Naive thymus-derived CD8-positive, alpha-beta T cell (primary cell): ENCODE measurements at regions of chr19 and their contacts with region 1.

Region 1: DNA sequence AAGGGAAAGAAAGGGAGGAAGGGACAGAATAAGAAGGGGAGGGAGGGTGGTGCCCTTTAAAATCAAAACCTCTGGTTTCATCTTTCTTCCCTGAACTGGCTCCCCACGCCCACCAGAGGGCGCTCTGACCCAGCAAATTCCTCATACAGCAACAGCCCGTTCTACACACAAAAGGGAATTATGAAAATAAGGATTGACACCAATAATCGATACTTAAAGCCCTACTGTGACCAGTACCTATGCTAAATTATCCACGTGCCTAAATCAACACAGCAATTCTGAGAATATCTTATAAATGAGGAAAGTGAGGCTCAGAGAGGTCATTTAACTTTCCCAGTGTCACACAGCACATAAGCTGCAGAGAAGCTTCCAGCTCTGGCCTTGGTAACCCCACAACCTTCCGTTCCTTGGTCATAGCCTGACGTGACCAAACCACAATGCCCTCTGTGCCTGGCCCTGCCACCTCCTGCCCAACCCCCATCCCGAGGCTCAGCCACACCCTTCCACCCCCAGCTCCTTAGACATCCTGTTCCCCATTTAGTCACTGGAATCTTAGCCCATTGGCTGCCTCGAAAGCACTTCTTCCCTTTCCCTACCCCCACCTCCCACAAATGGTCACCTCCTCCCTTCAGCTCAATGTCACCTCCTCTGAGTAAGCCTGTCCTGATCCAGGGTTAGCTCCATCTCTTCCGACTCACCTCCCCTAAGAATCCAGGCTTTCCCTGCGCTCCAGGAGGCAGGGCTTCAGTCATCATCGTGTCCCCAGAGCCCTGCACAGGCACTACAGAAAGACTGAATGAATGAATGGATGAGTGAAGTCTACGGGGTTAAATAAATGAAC is 34.2 kb upstream of the PNMA8B start:
- DNase-seq: peak; percentile 53 to 84 (median 74)
- ATAC-seq: peak; percentile 74 to 87
- H3K4me3 Mint-ChIP-seq: peak overlapping the region in 4 of 10 donors; percentile 1 to 30 (median 15)
- H3K27ac Mint-ChIP-seq: peak overlapping the region in 5 of 10 donors; percentile 43 to 83 (median 75)
- H3K4me1 Mint-ChIP-seq: peaks cover 12 to 31% (median 23%) of the 10 kb centered on the region in 4 donors
- H3K27me3 Mint-ChIP-seq: peaks cover 0 to 2% (median 0%) of the 10 kb centered on the region in 5 donors

Region 2: GRCh38 chr19:46515879-46516350 is 13.9 kb before region 1 on chr19:
- POLR2A ChIA-PET with region 1: interaction called, 16 read pairs
- DNase-seq: peak in 4 of 10 donors; percentile 29 to 60 (median 49)
- ATAC-seq: peak; percentile 63 to 69
- H3K4me3 Mint-ChIP-seq: peak overlapping the region in 2 of 10 donors; percentile 33 to 42
- H3K27ac Mint-ChIP-seq: peak overlapping the region in 7 of 10 donors; percentile 4 to 93 (median 66)
- H3K4me1 Mint-ChIP-seq: peaks cover 19 to 51% (median 38%) of the 10 kb centered on the region in 4 donors
- H3K27me3 Mint-ChIP-seq: peaks cover 5 to 11% (median 8%) of the 10 kb centered on the region in 5 donors